Cardiac septum (tissue), 1 donor: ENCODE measurements at regions of chr6 and their contacts with region 1.

Region 1: GRCh38 chr6:159252955-159253508 is 83.8 kb downstream of the FNDC1 start:
- DNase-seq: no peak

Region 2: GRCh38 chr6:159044899-159045727 is 207.9 kb before region 1 on chr6 and contains the start of gene TAGAP:
- intact Hi-C with region 1: no loop called
- DNase-seq: peak; percentile 93
- total RNA-seq, gene TAGAP: 0.75 TPM

Region 3: DNA sequence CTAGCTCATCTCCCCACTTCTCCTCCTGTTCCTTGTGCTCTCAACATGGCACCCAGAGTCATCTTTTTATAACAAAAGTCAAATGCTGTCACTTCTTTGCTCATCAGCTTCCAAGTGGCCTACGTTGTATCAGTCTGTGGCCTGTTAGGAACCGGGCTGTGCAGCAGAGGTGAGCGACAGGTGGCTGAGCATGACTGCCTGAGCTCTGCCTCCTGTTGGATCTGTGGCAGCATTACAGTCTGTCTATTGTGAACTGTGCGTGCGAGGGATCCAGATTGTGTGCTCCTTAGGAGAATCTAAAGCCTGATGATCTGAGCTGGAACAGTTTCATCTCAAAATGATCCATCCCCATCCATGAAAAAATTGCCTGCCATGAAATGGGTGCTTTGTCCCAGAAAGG is 45.8 kb after region 1 on chr6:
- intact Hi-C with region 1: no loop called
- DNase-seq: no peak

Region 4: GRCh38 chr6:159422041-159422984 is 169.3 kb after region 1 on chr6:
- intact Hi-C with region 1: loop called (anchors 5 kb)
- DNase-seq: no peak